Posterior vena cava (tissue), 2 donors: ENCODE measurements at regions of chr17 and their contacts with region 1.

Region 1: GRCh38 chr17:36978810-36979564 is 30.2 kb downstream of the AATF start:
- DNase-seq: no peak

Region 2: DNA sequence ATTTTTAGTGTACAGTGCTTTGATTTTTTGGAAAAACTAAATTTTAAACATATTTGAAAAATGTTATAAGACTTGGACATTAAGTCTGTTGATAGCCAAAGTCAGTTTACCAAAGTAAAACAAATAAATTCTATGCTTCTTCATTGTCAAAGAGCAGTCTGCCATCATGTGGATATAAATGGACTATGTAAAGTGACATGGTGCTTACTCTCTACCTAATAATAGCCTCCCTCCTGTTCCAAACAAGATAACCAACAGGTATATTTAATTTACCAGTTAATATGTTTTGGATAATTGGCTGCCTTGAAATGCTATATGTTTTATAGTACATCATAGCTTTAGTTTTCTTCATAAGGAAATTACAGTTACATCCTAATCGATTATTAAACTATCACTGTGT is 1153.8 kb before region 1 on chr17:
- intact Hi-C with region 1: loop called in 1 of 2 experiments (anchors 5 kb)
- DNase-seq: no peak

Region 3: DNA sequence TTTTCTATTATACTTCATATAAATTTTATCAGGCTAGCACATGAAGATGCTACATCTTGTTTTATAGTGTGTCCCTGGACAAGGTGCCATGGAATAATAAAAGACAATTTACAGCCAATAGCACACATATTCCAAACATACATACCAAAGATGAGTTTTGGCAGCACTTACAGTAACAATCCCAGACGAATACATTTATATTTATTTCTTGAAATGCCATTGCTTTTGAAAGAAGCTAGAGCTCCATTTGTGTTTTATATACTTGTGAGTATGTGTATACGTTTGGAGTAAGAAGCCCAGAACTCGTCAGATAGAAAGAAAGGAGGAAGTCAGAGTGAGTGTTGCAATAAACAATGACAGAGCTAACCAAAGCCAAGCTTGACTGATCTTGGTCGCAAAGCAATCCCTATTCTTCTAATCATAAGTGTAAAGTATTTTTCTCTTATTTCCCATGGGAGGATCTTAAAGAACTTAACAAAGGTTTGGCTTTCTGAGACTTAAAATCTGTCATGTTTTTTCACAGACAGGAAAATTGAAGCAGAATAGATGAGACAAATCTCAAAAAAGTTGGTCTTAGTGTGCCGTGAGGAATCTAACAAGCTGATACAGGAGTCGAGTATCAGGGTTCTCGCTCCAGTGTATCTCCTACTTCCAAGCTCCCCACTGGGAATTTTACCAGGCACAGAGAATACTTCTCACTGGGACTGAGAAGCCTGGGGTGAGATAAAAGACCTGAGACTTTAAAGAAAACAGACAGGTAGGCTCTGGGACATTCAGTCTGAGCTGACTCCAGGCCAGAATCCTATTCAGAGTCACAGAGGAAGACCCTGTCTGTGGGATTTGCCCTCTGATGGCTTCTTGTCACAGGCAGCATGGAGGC is 145.2 kb after region 1 on chr17:
- intact Hi-C with region 1: no loop called
- DNase-seq: no peak